ENCODE measurements at regions of chr14 and their contacts with region 1.

Region 1: GRCh38 chr14:89178802-89179535 is 238.1 kb downstream of the FOXN3 start:
- DNase-seq: no peak
- H3K4me3 Mint-ChIP-seq: no peak overlapping the region
- H3K27ac Mint-ChIP-seq: no peak overlapping the region
- H3K4me1 Mint-ChIP-seq: no peaks in the 10 kb centered on the region
- H3K27me3 Mint-ChIP-seq: no peaks in the 10 kb centered on the region
- CTCF ChIP-seq: no peak

Region 2: GRCh38 chr14:89085737-89086382 is 93.1 kb before region 1 on chr14:
- CTCF ChIA-PET with region 1: no interaction called
- POLR2A ChIA-PET with region 1: no interaction called
- intact Hi-C with region 1: no loop called
- DNase-seq: no peak
- H3K4me3 Mint-ChIP-seq: no peak overlapping the region
- H3K27ac Mint-ChIP-seq: no peak overlapping the region
- H3K4me1 Mint-ChIP-seq: no peaks in the 10 kb centered on the region
- H3K27me3 Mint-ChIP-seq: no peaks in the 10 kb centered on the region
- CTCF ChIP-seq: no peak

Region 3: DNA sequence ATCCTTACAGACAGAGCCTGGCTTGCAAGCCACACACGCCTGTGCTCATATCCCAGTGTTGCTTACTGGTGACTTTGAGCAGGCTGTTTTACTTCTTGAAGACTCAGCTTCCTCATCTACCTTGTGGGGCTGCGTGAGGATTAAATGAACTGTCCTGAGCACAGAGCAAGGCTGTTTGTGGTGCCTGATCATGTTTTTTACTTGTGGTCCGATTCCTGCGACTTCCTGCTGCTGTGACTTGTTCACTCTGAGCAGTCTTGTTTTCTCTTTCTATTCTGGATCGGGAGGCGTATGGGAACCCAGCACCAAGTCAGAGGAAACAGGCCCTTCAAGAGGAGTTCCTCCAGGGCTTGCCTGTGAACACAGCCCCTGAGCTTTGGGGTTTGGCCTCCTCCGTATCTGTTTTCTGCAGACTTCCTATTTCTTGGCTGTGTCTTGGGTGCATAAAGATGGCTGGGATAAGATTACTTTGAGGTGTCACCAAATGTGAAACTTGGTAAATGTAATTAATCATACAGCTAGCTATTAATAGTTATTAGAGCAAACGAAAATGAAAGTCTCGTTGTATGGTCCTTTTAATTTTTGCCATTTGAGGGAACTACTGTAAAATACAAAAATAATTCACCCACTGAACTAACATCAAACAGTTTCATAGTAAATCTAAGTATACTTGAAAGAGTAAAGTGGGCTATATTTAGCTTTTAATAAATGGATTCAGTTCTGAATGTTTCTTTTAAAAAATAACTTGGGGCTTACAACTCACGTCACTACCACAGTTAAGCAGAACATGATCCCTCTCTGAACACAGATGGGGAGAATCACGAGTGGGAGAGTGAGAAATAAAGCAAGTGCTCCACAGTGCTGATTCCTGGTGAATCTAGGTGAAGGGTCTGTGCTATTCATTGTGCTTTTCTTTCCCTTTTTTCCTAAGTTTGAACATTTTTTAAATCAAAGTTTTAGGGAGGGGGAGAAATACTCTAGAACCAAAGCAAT is 13.5 kb before region 1 on chr14:
- CTCF ChIA-PET with region 1: interaction called, 17 read pairs
- POLR2A ChIA-PET with region 1: no interaction called
- intact Hi-C with region 1: no loop called
- DNase-seq: no peak
- H3K4me3 Mint-ChIP-seq: no peak overlapping the region
- H3K27ac Mint-ChIP-seq: no peak overlapping the region
- H3K4me1 Mint-ChIP-seq: peaks cover 3% of the 10 kb centered on the region
- H3K27me3 Mint-ChIP-seq: no peaks in the 10 kb centered on the region
- CTCF ChIP-seq: no peak